ENCODE measurements at regions of chr17 and their contacts with region 1.

Region 1: GRCh38 chr17:80219013-80219762 is 945 bp downstream of the SGSH start:
- DNase-seq: peak; percentile 98
- ATAC-seq: peak; percentile 91
- H3K4me3 Mint-ChIP-seq: peak overlapping the region; percentile 86
- H3K27ac Mint-ChIP-seq: peak overlapping the region; percentile 93
- H3K4me1 Mint-ChIP-seq: peaks cover 28% of the 10 kb centered on the region
- H3K27me3 Mint-ChIP-seq: no peaks in the 10 kb centered on the region
- CTCF ChIP-seq: no peak

Region 2: DNA sequence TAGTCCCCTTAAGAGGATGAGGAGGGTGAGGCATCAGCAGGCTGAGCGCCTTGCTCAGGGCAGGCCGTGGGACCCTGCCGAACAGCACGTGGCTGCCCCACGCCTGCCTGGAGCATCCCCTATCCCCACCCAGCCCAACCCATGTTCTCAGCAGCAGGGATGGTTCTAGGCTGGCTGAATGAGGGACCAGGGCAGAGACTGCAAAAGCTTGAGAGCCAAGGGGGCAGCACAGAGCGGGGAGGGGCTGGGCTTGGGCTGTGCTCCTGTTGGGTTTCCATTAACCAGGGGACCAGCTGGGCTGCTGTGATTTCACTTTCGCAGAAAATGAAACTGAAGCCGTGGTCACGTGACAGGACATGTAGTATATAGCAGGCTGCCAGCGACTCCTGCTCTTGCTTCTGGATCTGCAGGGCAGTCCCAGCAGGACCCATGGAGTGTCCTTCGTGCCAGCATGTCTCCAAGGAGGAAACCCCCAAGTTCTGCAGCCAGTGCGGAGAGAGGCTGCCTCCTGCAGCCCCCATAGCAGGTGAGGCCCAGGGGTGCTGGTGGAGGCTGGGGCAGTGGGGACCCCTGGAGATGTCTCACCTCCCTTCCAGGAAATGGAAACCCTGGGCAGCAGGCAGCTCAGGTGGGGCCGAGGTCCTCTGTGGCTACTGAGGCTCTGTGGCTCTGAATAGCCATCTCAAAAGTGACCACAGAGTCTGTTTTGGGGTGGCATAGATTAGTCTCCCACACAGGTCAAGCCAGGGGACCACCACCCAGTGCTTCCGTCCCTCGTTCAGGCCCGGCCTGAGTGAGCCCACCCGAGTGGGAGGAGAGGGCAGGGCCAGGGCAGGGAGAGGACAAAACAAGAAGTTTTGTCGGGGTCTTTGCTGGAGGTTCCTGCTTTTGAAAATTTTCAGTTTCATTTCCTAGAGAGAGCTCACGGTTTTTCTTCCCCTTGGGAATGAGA is 44.3 kb after region 1 on chr17:
- CTCF ChIA-PET with region 1: no interaction called
- POLR2A ChIA-PET with region 1: interaction called, 11 read pairs
- intact Hi-C with region 1: no loop called
- DNase-seq: peak; percentile 98
- ATAC-seq: peak; percentile 40
- H3K4me3 Mint-ChIP-seq: peak overlapping the region; percentile 89
- H3K27ac Mint-ChIP-seq: peak overlapping the region; percentile 89
- H3K4me1 Mint-ChIP-seq: peaks cover 49% of the 10 kb centered on the region
- H3K27me3 Mint-ChIP-seq: no peaks in the 10 kb centered on the region
- CTCF ChIP-seq: no peak